Adrenal gland (tissue), 19 donors: ENCODE measurements at regions of chr11 and their contacts with region 1.

Region 1: DNA sequence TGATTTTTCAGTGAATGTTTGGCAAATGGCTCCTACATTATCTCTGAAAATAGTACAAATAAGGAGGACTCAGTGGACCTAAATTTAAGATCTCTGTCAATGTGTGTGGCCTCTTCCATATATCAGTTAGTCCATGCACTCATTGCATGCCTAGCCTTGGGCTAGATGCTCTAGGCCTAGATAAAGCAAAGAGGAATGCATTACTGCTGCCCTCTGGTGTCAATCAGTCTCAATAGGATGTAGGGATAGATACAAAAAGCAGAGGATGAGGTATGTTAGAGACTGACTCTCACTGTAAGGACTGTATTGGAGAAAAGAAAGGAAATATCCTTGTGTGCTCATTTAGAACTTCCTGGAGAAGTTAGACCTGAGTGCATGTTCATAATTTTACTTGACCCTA is 42.0 kb downstream of the MS4A2 start:
- DNase-seq: peak in 5 of 7 donors; percentile 26 to 61 (median 32)
- H3K4me3 ChIP-seq: no peak overlapping the region
- H3K27ac ChIP-seq: no peak overlapping the region
- H3K4me1 ChIP-seq: no peaks in the 10 kb centered on the region
- H3K27me3 ChIP-seq: no peaks in the 10 kb centered on the region
- CTCF ChIP-seq: peak; percentile 32 to 59 (median 44)
- POLR2A ChIP-seq: no peak

Region 2: GRCh38 chr11:59706518-59707285 is 423.8 kb before region 1 on chr11:
- intact Hi-C with region 1: no loop called
- DNase-seq: no peak
- H3K4me3 ChIP-seq: no peak overlapping the region
- H3K27ac ChIP-seq: no peak overlapping the region
- H3K4me1 ChIP-seq: no peaks in the 10 kb centered on the region
- H3K27me3 ChIP-seq: no peaks in the 10 kb centered on the region
- CTCF ChIP-seq: no peak
- POLR2A ChIP-seq: no peak

Region 3: GRCh38 chr11:59822989-59823566 is 307.4 kb before region 1 on chr11:
- intact Hi-C with region 1: loop called in 1 of 2 experiments (anchors 10 kb)
- DNase-seq: peak in 6 of 7 donors; percentile 30 to 58 (median 50)
- H3K4me3 ChIP-seq: no peak overlapping the region
- H3K27ac ChIP-seq: no peak overlapping the region
- H3K4me1 ChIP-seq: no peaks in the 10 kb centered on the region
- H3K27me3 ChIP-seq: no peaks in the 10 kb centered on the region
- CTCF ChIP-seq: peak; percentile 46 to 69 (median 62)
- POLR2A ChIP-seq: no peak